ENCODE measurements at regions of chrX and their contacts with region 1.

Region 1: GRCh38 chrX:103464774-103465117 is 54.5 kb downstream of the RAB40A start:
- DNase-seq: no peak

Region 2: DNA sequence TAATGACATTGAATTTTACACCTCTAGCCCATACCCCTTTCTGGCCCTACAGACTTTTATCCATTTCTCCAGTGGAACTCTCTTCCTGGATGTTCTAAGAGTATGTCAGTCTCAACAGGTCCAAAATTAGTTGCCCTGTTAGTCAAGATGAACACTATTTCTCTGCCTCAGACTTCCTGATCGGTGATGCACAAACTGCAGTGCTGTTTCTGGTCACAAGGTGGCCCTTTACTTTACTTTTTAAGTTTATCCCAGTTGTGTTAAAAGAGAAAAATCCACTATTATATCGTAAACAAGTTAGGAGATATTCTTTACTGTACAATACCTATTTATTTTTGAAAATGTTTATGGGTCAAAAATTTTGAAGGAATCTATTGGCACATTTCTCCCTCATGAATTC is 121.6 kb before region 1 on chrX:
- intact Hi-C with region 1: loop called in 1 of 2 experiments (anchors 10 kb)
- DNase-seq: no peak

Region 3: GRCh38 chrX:103398421-103398864 is 66.3 kb before region 1 on chrX:
- intact Hi-C with region 1: no loop called
- DNase-seq: no peak

Measured in posterior vena cava (tissue), 2 donors.